ENCODE measurements at regions of chr20 and their contacts with region 1.

Region 1: DNA sequence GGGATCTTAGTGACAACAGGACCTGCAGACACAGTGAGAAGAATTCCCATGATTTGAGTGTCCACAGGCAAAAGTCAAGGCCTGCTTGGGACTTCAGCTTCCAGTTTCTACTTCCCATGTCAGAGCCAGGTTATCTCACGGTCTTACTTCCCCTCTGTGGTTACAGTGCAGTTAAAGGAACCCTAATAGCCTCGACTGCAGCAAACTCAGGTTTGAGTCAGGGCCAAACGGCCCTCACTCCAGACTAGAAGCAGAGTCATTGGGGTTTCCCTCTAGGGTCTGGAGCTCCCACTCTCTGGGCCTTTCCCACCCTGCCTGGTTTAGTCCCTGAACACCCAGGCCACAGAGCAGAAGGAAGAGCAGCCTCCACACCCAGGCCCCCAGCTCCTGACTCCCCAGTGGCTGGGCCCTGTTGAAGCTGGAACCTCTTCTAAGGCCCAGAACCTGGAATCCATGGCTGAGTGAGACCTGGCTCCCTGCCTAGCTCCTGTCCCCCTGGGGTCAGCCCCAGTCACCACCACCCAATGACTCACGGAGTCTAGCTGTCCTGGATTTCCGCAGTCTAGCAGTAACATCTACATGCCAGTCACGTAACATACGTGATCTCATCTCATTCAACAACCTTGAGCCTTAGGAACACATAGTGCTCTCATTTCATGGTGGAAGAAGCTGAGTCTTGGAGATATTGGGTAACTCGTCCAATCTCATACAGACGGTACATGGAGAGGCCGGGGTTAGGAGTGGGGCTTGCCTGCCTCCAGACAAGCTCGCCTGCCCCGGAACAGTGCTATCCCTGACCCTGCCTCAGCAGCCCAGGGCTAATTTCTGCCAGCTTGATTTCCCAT is 9.2 kb upstream of the GHRH start:
- DNase-seq: no peak
- H3K4me3 ChIP-seq: no peak overlapping the region
- H3K27ac ChIP-seq: no peak overlapping the region
- H3K4me1 ChIP-seq: no peaks in the 10 kb centered on the region
- H3K27me3 ChIP-seq: 0 out of 2 replicates have a peak, but pooled peaks cover 3% of the 10 kb centered on the region

Region 2: DNA sequence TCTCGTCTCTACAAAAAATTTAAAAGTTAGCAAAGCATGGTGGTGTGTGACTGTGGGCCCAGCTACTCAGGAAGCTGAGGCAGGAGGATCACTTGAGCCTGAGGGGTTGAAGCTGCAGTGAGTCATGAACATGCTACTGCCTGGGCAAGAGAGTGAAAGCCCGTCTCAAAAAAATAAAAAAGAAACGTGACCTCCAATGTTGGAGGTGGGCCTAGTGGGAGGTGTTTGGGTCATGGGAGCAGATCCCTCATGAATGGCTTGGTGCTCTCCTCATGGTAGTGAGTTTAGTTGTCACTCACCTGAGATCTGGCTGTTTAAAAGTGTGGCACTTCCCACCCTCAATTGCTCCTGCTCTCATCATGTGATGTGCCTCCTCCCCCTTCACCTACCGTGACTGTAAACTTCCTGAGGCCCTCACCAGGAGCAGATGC is 199.3 kb before region 1 on chr20:
- in situ Hi-C with region 1: no loop called
- DNase-seq: peak; percentile 53
- H3K4me3 ChIP-seq: no peak overlapping the region
- H3K27ac ChIP-seq: no peak overlapping the region
- H3K4me1 ChIP-seq: no peaks in the 10 kb centered on the region
- H3K27me3 ChIP-seq: no peaks in the 10 kb centered on the region

Region 3: DNA sequence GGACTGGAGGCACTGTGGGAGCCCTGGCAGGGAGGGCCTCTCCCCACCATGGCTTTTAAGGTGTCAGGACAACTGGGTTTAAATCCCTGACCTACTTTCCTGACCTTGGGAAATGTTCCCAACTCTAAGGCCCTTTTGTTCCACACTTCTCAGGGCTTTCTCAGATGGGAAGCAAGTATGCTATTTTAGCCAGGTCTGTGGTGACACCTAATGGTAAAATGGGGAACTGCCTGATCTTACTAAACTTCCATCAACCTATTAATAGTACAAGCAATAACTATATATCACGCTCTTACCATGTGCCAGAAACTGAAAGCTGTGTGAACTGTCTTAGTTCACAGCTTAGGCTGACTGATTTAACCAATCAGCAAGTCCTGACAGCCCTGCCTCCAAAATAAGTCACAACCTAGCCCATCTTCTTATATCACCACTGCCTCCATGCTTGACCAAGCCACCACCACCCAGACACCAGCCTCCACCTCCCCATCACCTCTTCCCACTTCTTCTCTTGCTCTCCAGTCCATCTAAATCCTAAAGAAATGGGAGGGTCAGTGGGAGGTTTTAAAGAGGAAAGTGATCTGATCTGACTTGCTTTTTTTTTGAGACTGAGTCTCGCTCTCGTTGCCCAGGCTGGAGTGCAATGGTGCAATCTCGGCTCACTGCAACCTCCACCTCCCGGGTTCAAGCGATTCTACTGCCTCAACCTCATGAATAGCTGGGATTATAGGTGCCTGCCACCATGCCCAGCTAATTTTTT is 263.8 kb after region 1 on chr20:
- in situ Hi-C with region 1: loop called (anchors 5 kb)
- DNase-seq: peak; percentile 78
- H3K4me3 ChIP-seq: no peak overlapping the region
- H3K27ac ChIP-seq: no peak overlapping the region
- H3K4me1 ChIP-seq: no peaks in the 10 kb centered on the region
- H3K27me3 ChIP-seq: no peaks in the 10 kb centered on the region; the same call in none of the 2 replicates

Region 4: DNA sequence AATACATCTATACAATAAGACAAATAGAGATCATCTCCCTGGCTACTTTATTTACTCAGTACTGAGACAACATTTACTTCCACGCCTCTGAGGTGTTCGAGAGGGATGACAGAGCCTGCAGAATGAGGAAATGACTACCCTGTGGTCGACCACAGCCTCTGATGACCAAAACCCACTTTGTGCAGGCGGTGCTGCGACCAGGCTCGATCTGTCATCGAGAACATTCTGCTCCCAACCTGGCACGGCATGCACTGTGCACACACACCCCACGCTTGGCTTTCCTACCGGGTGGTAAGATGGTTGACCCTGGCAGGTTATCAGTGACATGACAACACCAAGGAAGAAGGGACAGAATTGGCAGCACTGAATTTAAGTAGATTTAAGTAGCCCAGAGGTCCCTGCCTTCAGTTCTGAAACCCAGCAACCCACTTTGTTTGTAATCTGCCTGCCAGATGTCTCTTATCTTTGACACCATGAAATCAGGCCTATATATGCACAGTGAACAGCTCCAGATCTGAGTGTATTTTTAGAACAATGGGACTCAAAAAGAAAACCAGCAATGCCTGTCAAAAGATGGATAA is 719.9 kb after region 1 on chr20:
- in situ Hi-C with region 1: loop called (anchors 25 kb)
- DNase-seq: peak; percentile 94
- H3K4me3 ChIP-seq: no peak overlapping the region
- H3K27ac ChIP-seq: peak overlapping the region; percentile 50
- H3K4me1 ChIP-seq: peaks cover 31% of the 10 kb centered on the region
- H3K27me3 ChIP-seq: no peaks in the 10 kb centered on the region